Body of pancreas (tissue), 4 donors: ENCODE measurements at regions of chr4 and their contacts with region 1.

Region 1: GRCh38 chr4:25439918-25440477 is 62.9 kb downstream of the ANAPC4 start:
- DNase-seq: peak; percentile 63 to 75 (median 74)
- ATAC-seq: peak; percentile 74
- H3K4me3 ChIP-seq: no peak overlapping the region
- H3K27ac ChIP-seq: peak overlapping the region in 2 of 4 donors; percentile 40 to 64
- H3K4me1 ChIP-seq: peaks cover 9% of the 10 kb centered on the region
- H3K27me3 ChIP-seq: no peaks in the 10 kb centered on the region
- CTCF ChIP-seq: peak; percentile 70 to 91 (median 78)
- POLR2A ChIP-seq: no peak

Region 2: DNA sequence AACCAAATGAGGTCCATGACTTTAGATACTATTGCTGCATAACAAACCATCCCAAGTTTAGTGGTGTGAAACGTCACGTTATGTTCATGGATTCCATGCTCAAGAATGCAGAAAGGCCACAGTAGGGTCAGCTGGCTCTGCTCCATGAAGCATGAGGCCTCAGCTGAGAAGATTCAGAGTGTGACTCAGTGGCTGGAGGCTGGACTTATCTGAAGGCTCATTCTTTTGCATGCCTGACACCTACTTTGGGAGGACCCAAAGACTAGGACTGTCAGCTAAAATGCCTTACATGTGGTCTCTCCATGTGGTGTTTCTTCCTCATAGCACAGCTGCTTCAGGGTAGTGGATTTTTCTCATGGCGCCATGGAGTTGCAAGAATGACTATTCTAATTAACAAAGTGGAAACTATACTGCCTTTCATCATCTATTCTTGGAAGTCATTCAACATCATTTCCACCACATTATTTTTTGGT is 515.7 kb before region 1 on chr4:
- intact Hi-C with region 1: no loop called
- DNase-seq: peak in 1 of 4 donors; percentile 42
- ATAC-seq: no peak
- H3K4me3 ChIP-seq: no peak overlapping the region
- H3K27ac ChIP-seq: no peak overlapping the region
- H3K4me1 ChIP-seq: peaks cover 14% of the 10 kb centered on the region
- H3K27me3 ChIP-seq: no peaks in the 10 kb centered on the region
- CTCF ChIP-seq: no peak
- POLR2A ChIP-seq: no peak

Region 3: GRCh38 chr4:25400699-25401399 is 39.1 kb before region 1 on chr4:
- intact Hi-C with region 1: no loop called
- DNase-seq: no peak
- ATAC-seq: no peak
- H3K4me3 ChIP-seq: no peak overlapping the region
- H3K27ac ChIP-seq: no peak overlapping the region
- H3K4me1 ChIP-seq: no peaks in the 10 kb centered on the region
- H3K27me3 ChIP-seq: no peaks in the 10 kb centered on the region
- CTCF ChIP-seq: no peak
- POLR2A ChIP-seq: no peak

Region 4: GRCh38 chr4:25770847-25771246 is 330.8 kb after region 1 on chr4:
- intact Hi-C with region 1: loop called (anchors 5 kb)
- DNase-seq: no peak
- ATAC-seq: no peak
- H3K4me3 ChIP-seq: no peak overlapping the region
- H3K27ac ChIP-seq: no peak overlapping the region
- H3K4me1 ChIP-seq: no peaks in the 10 kb centered on the region
- H3K27me3 ChIP-seq: no peaks in the 10 kb centered on the region
- CTCF ChIP-seq: no peak
- POLR2A ChIP-seq: no peak